Calu3 (cell line): ENCODE measurements at regions of chr7 and their contacts with region 1.

Region 1: GRCh38 chr7:151244196-151244840 is 4.2 kb downstream of the SMARCD3 start:
- DNase-seq: peak; percentile 59
- H3K4me3 Mint-ChIP-seq: no peak overlapping the region
- H3K27ac Mint-ChIP-seq: no peak overlapping the region
- H3K4me1 Mint-ChIP-seq: peaks cover 15% of the 10 kb centered on the region
- H3K27me3 Mint-ChIP-seq: peaks cover 59% of the 10 kb centered on the region
- CTCF ChIP-seq: peak; percentile 74

Region 2: GRCh38 chr7:151226875-151227782 is 17.2 kb before region 1 on chr7 and contains the start of gene ABCF2:
- CTCF ChIA-PET with region 1: interaction called, 14 read pairs
- intact Hi-C with region 1: no loop called
- DNase-seq: peak; percentile 98
- H3K4me3 Mint-ChIP-seq: peak within 1 kb of the TSS; percentile 88
- H3K27ac Mint-ChIP-seq: peak within 1 kb of the TSS; percentile 87
- H3K4me1 Mint-ChIP-seq: peaks cover 21% of the 10 kb centered on the region
- H3K27me3 Mint-ChIP-seq: no peaks in the 10 kb centered on the region
- CTCF ChIP-seq: no peak
- total RNA-seq, gene ABCF2: 43.0 and 49.7 TPM in 2 replicates

Region 3: GRCh38 chr7:151304856-151305255 is 60.5 kb after region 1 on chr7:
- CTCF ChIA-PET with region 1: no interaction called
- intact Hi-C with region 1: loop called (anchors 5 kb)
- DNase-seq: no peak
- H3K4me3 Mint-ChIP-seq: no peak overlapping the region
- H3K27ac Mint-ChIP-seq: no peak overlapping the region
- H3K4me1 Mint-ChIP-seq: no peaks in the 10 kb centered on the region
- H3K27me3 Mint-ChIP-seq: peaks cover 85% of the 10 kb centered on the region
- CTCF ChIP-seq: no peak